ENCODE measurements at regions of chr13 and their contacts with region 1.

Region 1: DNA sequence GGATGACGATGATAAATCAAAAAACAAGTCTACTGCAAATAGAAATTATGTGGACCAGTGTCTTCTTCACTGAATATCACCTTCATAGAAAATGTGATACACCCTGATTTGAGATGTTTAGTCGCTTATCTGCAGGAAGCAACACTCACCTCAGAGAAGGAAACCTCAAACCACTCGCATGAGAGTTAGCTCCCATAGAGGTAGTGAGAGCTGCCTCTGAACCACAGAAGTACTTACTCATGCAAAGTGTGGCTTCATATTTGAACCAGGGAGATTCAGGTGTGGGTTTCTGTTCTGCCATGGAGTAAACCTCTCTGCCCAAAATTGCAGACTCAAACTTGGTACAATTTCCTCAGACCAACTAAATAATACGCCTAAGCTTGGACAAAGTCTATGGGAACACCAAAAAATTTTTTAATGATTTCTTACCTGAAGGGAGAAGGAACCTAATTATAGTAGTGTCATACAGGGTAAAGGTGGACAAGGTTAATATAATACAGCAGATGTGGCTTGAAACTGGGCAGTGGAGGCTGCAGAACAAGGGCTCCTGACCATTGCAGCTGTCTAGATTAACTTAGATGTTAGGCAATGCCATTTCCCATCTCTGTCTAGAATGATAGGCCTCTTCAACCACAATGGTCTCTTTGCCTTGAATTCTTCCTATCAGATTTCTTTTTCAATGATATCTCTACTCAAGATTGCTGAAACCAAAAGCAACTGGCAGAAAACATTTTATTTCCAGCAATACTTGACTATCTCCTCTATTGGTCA is 29.6 kb upstream of the RCBTB2 start:
- DNase-seq: peak; percentile 88
- ATAC-seq: peak; percentile 94
- H3K4me3 Mint-ChIP-seq: no peak overlapping the region
- H3K27ac Mint-ChIP-seq: no peak overlapping the region
- H3K4me1 Mint-ChIP-seq: peaks cover 28% of the 10 kb centered on the region
- H3K27me3 Mint-ChIP-seq: peaks cover 61% of the 10 kb centered on the region
- CTCF ChIP-seq: no peak

Region 2: GRCh38 chr13:48400850-48401291 is 161.6 kb before region 1 on chr13:
- CTCF ChIA-PET with region 1: interaction called, 3 read pairs
- POLR2A ChIA-PET with region 1: no interaction called
- intact Hi-C with region 1: loop called (anchors 2 kb)
- DNase-seq: no peak
- ATAC-seq: peak; percentile 32
- H3K4me3 Mint-ChIP-seq: no peak overlapping the region
- H3K27ac Mint-ChIP-seq: peak overlapping the region; percentile 7
- H3K4me1 Mint-ChIP-seq: peaks cover 43% of the 10 kb centered on the region
- H3K27me3 Mint-ChIP-seq: no peaks in the 10 kb centered on the region
- CTCF ChIP-seq: no peak

Region 3: DNA sequence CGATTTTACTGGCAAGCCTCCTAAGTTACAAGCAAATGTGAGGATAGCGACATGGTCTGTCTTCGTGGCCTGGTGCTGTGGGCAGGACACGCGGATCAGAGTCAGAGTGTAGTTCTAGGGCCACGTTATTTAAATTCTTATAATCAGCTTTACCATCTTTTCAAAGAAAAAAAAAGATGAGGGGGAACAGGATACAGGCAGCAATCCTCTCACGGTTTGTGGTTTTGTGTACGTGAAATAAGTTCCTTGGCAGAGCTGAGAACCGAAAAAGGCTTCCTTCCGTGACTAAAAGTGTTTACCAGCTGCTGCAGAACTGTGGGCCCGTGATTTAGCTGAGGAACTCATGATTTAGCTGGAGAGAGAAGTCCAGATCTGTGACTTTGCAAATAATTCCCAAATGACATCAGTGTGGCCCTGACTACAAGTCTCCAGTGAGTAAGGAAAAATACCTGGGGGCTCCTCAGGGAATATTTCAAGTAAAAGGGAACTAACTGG is 56.8 kb before region 1 on chr13:
- CTCF ChIA-PET with region 1: interaction called, 3 read pairs
- POLR2A ChIA-PET with region 1: no interaction called
- intact Hi-C with region 1: loop called (anchors 2 kb)
- DNase-seq: peak; percentile 68
- ATAC-seq: peak; percentile 76
- H3K4me3 Mint-ChIP-seq: peak overlapping the region; percentile 39
- H3K27ac Mint-ChIP-seq: peak overlapping the region; percentile 92
- H3K4me1 Mint-ChIP-seq: peaks cover 34% of the 10 kb centered on the region
- H3K27me3 Mint-ChIP-seq: no peaks in the 10 kb centered on the region
- CTCF ChIP-seq: no peak

Region 4: DNA sequence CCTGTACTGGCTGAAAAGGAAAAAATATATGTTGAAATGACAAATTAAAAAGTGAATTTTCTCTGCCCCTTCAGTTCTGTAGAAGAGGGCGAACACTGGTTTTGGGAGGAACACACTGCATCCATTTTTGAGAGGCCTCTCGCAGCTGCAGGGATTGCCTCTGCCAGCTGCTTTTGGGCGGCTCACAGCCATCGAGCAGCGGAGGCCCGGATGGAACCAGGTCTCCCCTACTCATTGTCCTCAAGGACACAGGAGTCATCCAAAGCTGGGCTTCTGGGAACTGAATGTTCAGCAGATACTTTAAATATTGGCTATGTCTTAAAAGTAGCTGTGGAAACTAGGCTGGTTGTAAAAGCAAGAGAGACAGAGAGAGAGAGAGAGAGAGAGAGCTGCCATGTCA is 46.7 kb before region 1 on chr13:
- CTCF ChIA-PET with region 1: no interaction called
- POLR2A ChIA-PET with region 1: no interaction called
- intact Hi-C with region 1: no loop called
- DNase-seq: no peak
- ATAC-seq: no peak
- H3K4me3 Mint-ChIP-seq: no peak overlapping the region
- H3K27ac Mint-ChIP-seq: no peak overlapping the region
- H3K4me1 Mint-ChIP-seq: no peaks in the 10 kb centered on the region
- H3K27me3 Mint-ChIP-seq: no peaks in the 10 kb centered on the region
- CTCF ChIP-seq: no peak

Region 5: DNA sequence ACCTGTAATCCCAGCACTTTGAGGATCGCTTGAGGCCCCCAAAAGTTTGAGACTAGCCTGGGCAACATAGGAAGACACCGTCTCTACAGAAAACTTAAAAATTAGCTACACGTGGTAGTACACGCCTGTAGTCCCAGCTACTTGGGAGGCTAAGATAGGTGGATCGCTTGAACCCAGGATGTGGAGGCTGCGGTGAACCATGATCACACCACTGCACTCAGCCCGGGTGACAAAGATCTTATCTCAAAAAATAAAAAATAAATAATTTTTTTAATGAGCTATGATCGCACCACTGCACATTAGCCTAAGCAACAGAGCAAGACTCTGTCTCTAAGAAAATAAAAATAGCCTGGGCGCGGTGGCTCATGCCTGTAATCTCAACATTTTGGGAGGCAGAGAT is 36.2 kb before region 1 on chr13:
- CTCF ChIA-PET with region 1: no interaction called
- POLR2A ChIA-PET with region 1: no interaction called
- intact Hi-C with region 1: no loop called
- DNase-seq: no peak
- ATAC-seq: no peak
- H3K4me3 Mint-ChIP-seq: no peak overlapping the region
- H3K27ac Mint-ChIP-seq: no peak overlapping the region
- H3K4me1 Mint-ChIP-seq: peaks cover 7% of the 10 kb centered on the region
- H3K27me3 Mint-ChIP-seq: no peaks in the 10 kb centered on the region
- CTCF ChIP-seq: no peak